Activated CD4-positive, alpha-beta T cell treated with anti-CD3 and anti-CD28 coated beads for 36 hours (primary cell): ENCODE measurements at regions of chr12 and their contacts with region 1.

Region 1: DNA sequence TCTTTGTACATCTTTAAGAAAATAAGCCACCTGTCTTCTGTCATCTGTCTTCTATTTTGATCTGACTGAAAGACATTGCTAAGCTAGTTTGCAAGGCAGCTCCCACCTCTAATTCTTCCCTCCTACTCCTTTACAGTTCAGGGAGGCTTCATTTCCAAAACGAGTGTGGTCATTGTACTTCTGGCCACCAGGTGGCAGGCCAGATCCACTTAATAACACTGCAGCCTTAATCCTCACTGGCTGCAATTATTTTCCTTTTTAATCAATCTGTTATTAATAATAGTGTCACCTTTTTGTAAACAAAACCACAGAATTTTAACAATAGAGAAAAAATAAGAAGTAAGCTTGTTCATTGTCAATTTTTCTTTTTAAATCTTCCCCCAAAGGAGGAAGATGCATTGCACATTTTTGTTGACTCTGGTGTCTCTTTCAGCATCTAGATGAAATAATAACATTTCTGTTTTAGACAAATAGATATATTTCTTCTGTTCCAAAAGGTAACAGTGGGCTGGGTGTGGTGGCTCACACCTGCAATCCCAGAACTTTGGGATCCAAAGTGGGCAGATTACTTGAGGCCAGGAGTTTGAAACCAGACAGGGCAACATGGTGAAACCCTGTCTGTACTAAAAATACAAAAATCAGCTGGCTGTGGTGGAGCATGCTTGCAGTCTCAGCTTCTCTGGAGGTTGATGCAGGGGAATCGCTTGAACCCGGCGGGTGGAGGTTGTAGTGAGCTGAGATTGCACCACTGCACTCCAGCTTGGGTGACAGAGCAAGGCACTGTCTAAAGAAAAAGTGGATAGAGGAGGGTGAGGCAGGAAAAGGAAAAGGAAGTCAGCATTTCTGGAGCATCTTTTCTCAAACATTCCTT is 23.3 kb downstream of the GABARAPL1 start:
- DNase-seq: peak; percentile 57
- ATAC-seq: no peak
- H3K4me3 Mint-ChIP-seq: no peak overlapping the region
- H3K27ac Mint-ChIP-seq: no peak overlapping the region
- H3K4me1 Mint-ChIP-seq: no peaks in the 10 kb centered on the region
- H3K27me3 Mint-ChIP-seq: peaks cover 11% of the 10 kb centered on the region

Region 2: GRCh38 chr12:10175846-10176636 is 60.0 kb before region 1 on chr12:
- CTCF ChIA-PET with region 1: no interaction called
- POLR2A ChIA-PET with region 1: no interaction called
- intact Hi-C with region 1: no loop called
- DNase-seq: no peak
- ATAC-seq: no peak
- H3K4me3 Mint-ChIP-seq: no peak overlapping the region
- H3K27ac Mint-ChIP-seq: no peak overlapping the region
- H3K4me1 Mint-ChIP-seq: no peaks in the 10 kb centered on the region
- H3K27me3 Mint-ChIP-seq: peaks cover 19% of the 10 kb centered on the region

Region 3: GRCh38 chr12:10331642-10332239 is 95.7 kb after region 1 on chr12:
- CTCF ChIA-PET with region 1: no interaction called
- POLR2A ChIA-PET with region 1: no interaction called
- intact Hi-C with region 1: loop called in 1 of 2 experiments (anchors 5 kb)
- DNase-seq: no peak
- ATAC-seq: peak; percentile 55
- H3K4me3 Mint-ChIP-seq: no peak overlapping the region
- H3K27ac Mint-ChIP-seq: no peak overlapping the region
- H3K4me1 Mint-ChIP-seq: peaks cover 2% of the 10 kb centered on the region
- H3K27me3 Mint-ChIP-seq: no peaks in the 10 kb centered on the region

Region 4: DNA sequence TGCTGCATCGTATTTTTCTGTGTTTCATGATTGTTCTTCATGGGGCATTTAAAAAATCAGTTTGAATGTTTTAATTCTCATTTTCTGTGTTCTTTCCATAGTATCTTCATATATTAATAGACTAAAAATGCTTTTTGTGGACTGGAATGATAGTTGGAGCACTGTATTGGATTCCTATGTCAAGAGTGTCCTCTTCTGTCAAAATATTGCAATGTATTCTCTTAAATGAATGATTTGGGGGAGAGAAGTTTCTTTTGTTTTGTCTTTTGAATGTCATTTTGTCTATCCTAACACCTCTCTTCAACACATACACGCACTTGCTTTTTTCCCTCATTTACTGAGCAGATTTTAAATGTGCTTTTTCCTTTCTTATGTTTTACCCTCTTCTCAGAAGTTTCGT is 265.0 kb after region 1 on chr12:
- CTCF ChIA-PET with region 1: interaction called, 3 read pairs
- POLR2A ChIA-PET with region 1: no interaction called
- intact Hi-C with region 1: loop called in 1 of 2 experiments (anchors 5 kb)
- DNase-seq: no peak
- ATAC-seq: no peak
- H3K4me3 Mint-ChIP-seq: no peak overlapping the region
- H3K27ac Mint-ChIP-seq: no peak overlapping the region
- H3K4me1 Mint-ChIP-seq: peaks cover 18% of the 10 kb centered on the region
- H3K27me3 Mint-ChIP-seq: peaks cover 27% of the 10 kb centered on the region

Region 5: GRCh38 chr12:10562306-10562933 is 326.4 kb after region 1 on chr12:
- CTCF ChIA-PET with region 1: interaction called, 31 read pairs
- POLR2A ChIA-PET with region 1: no interaction called
- intact Hi-C with region 1: loop called (anchors 1 kb)
- DNase-seq: peak; percentile 22
- ATAC-seq: no peak
- H3K4me3 Mint-ChIP-seq: no peak overlapping the region
- H3K27ac Mint-ChIP-seq: no peak overlapping the region
- H3K4me1 Mint-ChIP-seq: peaks cover 4% of the 10 kb centered on the region
- H3K27me3 Mint-ChIP-seq: peaks cover 6% of the 10 kb centered on the region